PC-3 (cell line): ENCODE measurements at regions of chr4 and their contacts with region 1.

Region 1: DNA sequence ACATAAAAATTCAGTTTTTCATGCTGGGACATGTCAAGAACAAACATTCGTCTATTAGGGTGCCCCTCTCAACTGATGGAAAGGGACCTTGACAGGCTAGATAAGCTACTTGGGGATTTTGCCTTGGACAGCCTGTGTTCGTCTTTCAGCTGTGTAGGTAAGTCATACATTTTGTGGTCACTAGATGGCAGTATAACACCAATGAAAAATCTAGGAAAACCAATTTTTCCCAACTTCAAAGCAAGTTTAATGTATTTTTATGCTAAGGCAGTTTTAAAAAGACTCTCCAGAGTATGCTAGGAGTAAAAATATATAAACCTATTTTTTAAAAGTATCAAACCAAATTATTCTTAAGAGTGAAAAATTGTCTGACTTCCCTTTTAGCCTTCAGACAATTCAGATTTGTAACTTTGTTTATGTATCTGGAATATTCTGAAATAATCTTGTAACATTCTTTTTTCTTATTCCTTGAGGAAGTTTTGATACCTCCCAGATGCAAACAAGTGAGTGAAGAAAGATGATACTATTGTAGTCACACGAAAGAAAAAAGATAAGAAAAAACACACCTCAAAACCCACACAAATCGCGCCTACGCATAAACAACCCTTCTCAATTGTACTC is 158.3 kb downstream of the CPE start:
- DNase-seq: peak; percentile 77
- ATAC-seq: peak; percentile 43; the same call in 1 of the 2 replicates
- H3K4me3 ChIP-seq: no peak overlapping the region
- H3K27ac ChIP-seq: no peak overlapping the region
- H3K4me1 ChIP-seq: no peaks in the 10 kb centered on the region
- H3K27me3 ChIP-seq: no peaks in the 10 kb centered on the region
- CTCF ChIP-seq: peak; percentile 65

Region 2: DNA sequence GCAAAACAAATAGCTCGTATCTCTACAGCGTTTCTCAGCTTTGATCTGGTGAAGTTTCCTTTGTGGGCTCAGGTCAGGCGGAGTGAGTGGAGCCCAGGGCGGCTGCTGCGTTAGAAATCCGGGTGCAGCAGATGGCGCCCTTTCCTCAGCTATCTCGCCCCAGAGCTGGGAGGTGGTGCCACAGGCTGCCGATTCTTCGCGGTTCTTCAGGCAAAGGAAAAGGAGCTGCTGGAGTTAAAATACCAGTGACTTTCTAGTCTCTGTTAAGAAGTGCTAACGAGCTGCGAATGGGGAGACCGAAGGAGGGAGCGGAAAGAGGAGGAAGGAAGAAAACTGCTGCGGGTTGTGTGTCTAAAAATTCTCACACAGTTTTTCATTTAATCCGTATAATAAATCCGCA is 43.8 kb before region 1 on chr4:
- CTCF ChIA-PET with region 1: interaction called, 5 read pairs
- POLR2A ChIA-PET with region 1: no interaction called
- intact Hi-C with region 1: loop called (anchors 1 kb)
- DNase-seq: peak; percentile 76
- ATAC-seq: peak; percentile 93
- H3K4me3 ChIP-seq: no peak overlapping the region
- H3K27ac ChIP-seq: no peak overlapping the region
- H3K4me1 ChIP-seq: 0 out of 2 replicates have a peak, but pooled peaks cover 4% of the 10 kb centered on the region
- H3K27me3 ChIP-seq: no peaks in the 10 kb centered on the region
- CTCF ChIP-seq: peak; percentile 86

Region 3: DNA sequence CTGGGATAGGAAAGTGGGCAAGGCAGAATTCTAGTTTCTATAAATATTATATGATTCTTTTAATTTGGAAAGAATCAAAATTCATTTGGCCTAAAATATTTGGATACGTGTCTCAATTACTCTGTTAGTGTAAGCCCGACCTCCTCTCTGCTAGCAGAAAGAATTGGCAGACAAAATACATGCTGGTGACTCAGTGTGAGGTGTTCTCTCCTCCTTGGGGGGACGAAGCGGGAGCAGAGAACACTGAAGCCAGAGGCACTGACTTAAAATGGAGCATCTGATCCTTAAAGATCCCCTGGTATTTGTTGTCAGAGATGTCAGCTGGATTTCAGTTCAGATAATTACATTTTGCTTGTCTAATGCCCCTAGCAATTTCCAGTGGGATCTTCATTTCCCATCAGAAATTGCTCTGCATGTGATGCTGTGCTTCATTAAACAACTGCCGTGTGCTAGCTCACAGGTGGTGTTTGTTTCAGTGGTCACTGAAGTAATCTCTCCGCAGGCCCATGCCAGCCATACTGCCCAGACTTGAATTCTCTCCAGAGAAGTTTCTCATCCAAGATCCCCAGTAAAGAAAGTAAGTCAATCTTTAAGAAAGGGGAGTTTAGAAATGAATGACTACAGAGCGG is 147.2 kb after region 1 on chr4:
- CTCF ChIA-PET with region 1: no interaction called
- POLR2A ChIA-PET with region 1: no interaction called
- intact Hi-C with region 1: loop called (anchors 5 kb)
- DNase-seq: peak; percentile 90
- ATAC-seq: peak; percentile 67
- H3K4me3 ChIP-seq: peak overlapping the region; percentile 36; the same call in 1 of the 2 replicates
- H3K27ac ChIP-seq: peak overlapping the region; percentile 71
- H3K4me1 ChIP-seq: peaks cover 64% of the 10 kb centered on the region
- H3K27me3 ChIP-seq: no peaks in the 10 kb centered on the region
- CTCF ChIP-seq: no peak

Region 4: GRCh38 chr4:165784672-165785071 is 247.5 kb after region 1 on chr4:
- CTCF ChIA-PET with region 1: no interaction called
- POLR2A ChIA-PET with region 1: no interaction called
- intact Hi-C with region 1: loop called (anchors 5 kb)
- DNase-seq: peak; percentile 6
- ATAC-seq: no peak
- H3K4me3 ChIP-seq: no peak overlapping the region
- H3K27ac ChIP-seq: no peak overlapping the region
- H3K4me1 ChIP-seq: no peaks in the 10 kb centered on the region
- H3K27me3 ChIP-seq: no peaks in the 10 kb centered on the region
- CTCF ChIP-seq: no peak

Region 5: GRCh38 chr4:165855191-165855590 is 318.1 kb after region 1 on chr4:
- CTCF ChIA-PET with region 1: no interaction called
- POLR2A ChIA-PET with region 1: no interaction called
- intact Hi-C with region 1: loop called (anchors 1 kb)
- DNase-seq: no peak
- ATAC-seq: no peak
- H3K4me3 ChIP-seq: no peak overlapping the region
- H3K27ac ChIP-seq: no peak overlapping the region
- H3K4me1 ChIP-seq: no peaks in the 10 kb centered on the region
- H3K27me3 ChIP-seq: no peaks in the 10 kb centered on the region
- CTCF ChIP-seq: no peak

Region 6: DNA sequence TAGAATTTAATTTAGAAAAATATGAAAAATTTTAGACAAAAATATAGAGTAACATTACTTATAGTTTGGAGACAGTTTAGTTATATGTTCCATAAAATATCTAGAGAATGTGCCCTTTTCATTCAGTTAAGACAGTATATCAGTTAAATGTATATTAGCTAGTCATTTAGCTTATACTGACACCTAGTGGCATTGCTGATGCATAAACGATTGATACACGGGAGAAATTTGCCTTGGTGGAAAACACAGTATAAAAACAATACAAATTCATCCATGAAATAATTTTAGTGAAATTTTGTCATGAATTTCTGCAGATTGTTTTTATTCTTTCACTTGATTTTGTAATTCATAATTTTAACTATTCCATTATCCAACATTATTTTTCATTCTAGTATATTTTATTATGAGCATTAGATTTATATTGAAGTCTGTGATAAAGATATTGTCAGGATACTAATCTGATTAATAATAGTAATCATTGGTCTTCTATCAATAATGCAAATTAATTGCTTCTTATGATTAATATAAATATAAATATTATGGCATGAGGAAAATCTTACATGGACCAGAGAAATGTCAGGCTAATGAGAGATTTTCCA is 554.9 kb after region 1 on chr4:
- CTCF ChIA-PET with region 1: no interaction called
- POLR2A ChIA-PET with region 1: no interaction called
- intact Hi-C with region 1: loop called (anchors 1 kb)
- DNase-seq: peak; percentile 64
- ATAC-seq: peak; percentile 33; the same call in 1 of the 2 replicates
- H3K4me3 ChIP-seq: no peak overlapping the region
- H3K27ac ChIP-seq: no peak overlapping the region
- H3K4me1 ChIP-seq: peaks cover 4% of the 10 kb centered on the region
- H3K27me3 ChIP-seq: no peaks in the 10 kb centered on the region
- CTCF ChIP-seq: peak; percentile 71